Endothelial cell of umbilical vein (primary cell): ENCODE measurements at regions of chr14 and their contacts with region 1.

Region 1: GRCh38 chr14:22653012-22653621 is 9.0 kb upstream of the OR6J1 start:
- DNase-seq: peak; percentile 75
- H3K4me3 ChIP-seq: no peak overlapping the region
- H3K27ac ChIP-seq: peak overlapping the region; percentile 29
- H3K4me1 ChIP-seq: peaks cover 19% of the 10 kb centered on the region
- H3K27me3 ChIP-seq: no peaks in the 10 kb centered on the region
- CTCF ChIP-seq: peak; percentile 89 to 95
- POLR2A ChIP-seq: no peak

Region 2: GRCh38 chr14:22570132-22570949 is 82.8 kb before region 1 on chr14:
- CTCF ChIA-PET with region 1: interaction called, 293 read pairs
- POLR2A ChIA-PET with region 1: interaction called, 4 read pairs
- dilution Hi-C with region 1: no loop called
- intact Hi-C with region 1: loop called (anchors 1 kb)
- DNase-seq: peak; percentile 83
- H3K4me3 ChIP-seq: no peak overlapping the region
- H3K27ac ChIP-seq: no peak overlapping the region
- H3K4me1 ChIP-seq: peaks cover 40% of the 10 kb centered on the region
- H3K27me3 ChIP-seq: no peaks in the 10 kb centered on the region
- CTCF ChIP-seq: peak; percentile 55 to 63
- POLR2A ChIP-seq: no peak

Region 3: DNA sequence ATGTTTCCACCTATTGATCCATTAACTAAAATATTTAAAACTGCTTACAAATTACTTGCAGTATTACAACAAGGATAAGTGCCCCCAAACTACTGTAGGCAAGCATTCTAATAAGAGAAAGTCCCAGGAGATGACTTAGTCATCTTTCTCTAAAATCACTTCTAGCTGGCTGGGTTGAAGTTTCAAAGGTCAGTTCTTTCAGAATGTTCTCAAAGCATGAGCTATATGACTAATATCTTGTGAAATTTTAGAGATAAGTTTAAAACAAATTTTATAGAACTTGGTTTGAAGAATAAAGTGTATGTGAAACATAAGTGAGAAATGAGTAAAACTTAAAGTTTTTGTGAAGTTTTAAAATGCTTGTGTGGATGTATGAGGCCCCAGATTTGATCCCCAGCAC is 15.3 kb after region 1 on chr14:
- CTCF ChIA-PET with region 1: interaction called, 12 read pairs
- POLR2A ChIA-PET with region 1: no interaction called
- dilution Hi-C with region 1: no loop called
- intact Hi-C with region 1: no loop called
- DNase-seq: no peak
- H3K4me3 ChIP-seq: no peak overlapping the region
- H3K27ac ChIP-seq: no peak overlapping the region
- H3K4me1 ChIP-seq: peaks cover 4% of the 10 kb centered on the region
- H3K27me3 ChIP-seq: no peaks in the 10 kb centered on the region
- CTCF ChIP-seq: no peak
- POLR2A ChIP-seq: no peak

Region 4: GRCh38 chr14:22739423-22739822 is 86.3 kb after region 1 on chr14:
- CTCF ChIA-PET with region 1: interaction called, 14 read pairs
- POLR2A ChIA-PET with region 1: no interaction called
- dilution Hi-C with region 1: no loop called
- intact Hi-C with region 1: loop called (anchors 1 kb)
- DNase-seq: peak; percentile 88
- H3K4me3 ChIP-seq: no peak overlapping the region
- H3K27ac ChIP-seq: peak overlapping the region; percentile 97
- H3K4me1 ChIP-seq: peaks cover 30% of the 10 kb centered on the region
- H3K27me3 ChIP-seq: no peaks in the 10 kb centered on the region
- CTCF ChIP-seq: no peak
- POLR2A ChIP-seq: no peak

Region 5: DNA sequence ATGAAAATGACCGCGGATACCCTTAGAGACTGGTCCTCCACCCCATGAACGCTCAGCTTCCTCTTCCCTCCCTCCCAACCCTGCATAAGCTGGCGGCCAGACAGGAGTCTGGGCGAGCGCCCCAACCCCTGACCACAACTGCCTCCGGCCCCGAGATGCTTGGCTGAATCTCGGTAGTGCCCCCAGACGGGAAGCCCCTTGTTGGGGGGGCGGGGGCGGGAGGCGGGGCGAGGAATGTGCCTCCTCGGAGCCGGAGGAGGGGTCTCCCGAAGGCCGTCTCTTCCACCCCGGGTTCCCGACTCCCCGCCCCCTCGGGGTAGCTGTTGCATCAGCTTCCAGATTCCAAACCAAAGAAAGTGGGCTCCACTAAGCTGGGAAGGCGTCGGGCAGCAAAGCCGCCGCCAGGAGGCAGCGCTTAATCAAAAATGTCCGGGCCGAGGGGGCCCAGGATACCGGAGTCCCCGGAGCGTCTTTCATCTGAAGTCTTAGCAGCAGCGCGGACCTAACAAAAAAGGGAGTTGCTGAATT is 169.5 kb after region 1 on chr14:
- CTCF ChIA-PET with region 1: interaction called, 85 read pairs
- POLR2A ChIA-PET with region 1: interaction called, 3 read pairs
- dilution Hi-C with region 1: no loop called
- intact Hi-C with region 1: loop called (anchors 1 kb)
- DNase-seq: peak; percentile 91
- H3K4me3 ChIP-seq: peak overlapping the region; percentile 14 to 57 (median 32)
- H3K27ac ChIP-seq: peak overlapping the region; percentile 68
- H3K4me1 ChIP-seq: peaks cover 47% of the 10 kb centered on the region
- H3K27me3 ChIP-seq: no peaks in the 10 kb centered on the region
- CTCF ChIP-seq: peak; percentile 86 to 88
- POLR2A ChIP-seq: no peak

Region 6: GRCh38 chr14:22900081-22900799 is 247.1 kb after region 1 on chr14:
- CTCF ChIA-PET with region 1: interaction called, 7 read pairs
- POLR2A ChIA-PET with region 1: no interaction called
- dilution Hi-C with region 1: no loop called
- intact Hi-C with region 1: loop called (anchors 1 kb)
- DNase-seq: peak; percentile 70
- H3K4me3 ChIP-seq: no peak overlapping the region
- H3K27ac ChIP-seq: no peak overlapping the region
- H3K4me1 ChIP-seq: no peaks in the 10 kb centered on the region
- H3K27me3 ChIP-seq: no peaks in the 10 kb centered on the region
- CTCF ChIP-seq: peak; percentile 38 to 65
- POLR2A ChIP-seq: no peak